Naive thymus-derived CD4-positive, alpha-beta T cell (primary cell): ENCODE measurements at regions of chr15 and their contacts with region 1.

Region 1: DNA sequence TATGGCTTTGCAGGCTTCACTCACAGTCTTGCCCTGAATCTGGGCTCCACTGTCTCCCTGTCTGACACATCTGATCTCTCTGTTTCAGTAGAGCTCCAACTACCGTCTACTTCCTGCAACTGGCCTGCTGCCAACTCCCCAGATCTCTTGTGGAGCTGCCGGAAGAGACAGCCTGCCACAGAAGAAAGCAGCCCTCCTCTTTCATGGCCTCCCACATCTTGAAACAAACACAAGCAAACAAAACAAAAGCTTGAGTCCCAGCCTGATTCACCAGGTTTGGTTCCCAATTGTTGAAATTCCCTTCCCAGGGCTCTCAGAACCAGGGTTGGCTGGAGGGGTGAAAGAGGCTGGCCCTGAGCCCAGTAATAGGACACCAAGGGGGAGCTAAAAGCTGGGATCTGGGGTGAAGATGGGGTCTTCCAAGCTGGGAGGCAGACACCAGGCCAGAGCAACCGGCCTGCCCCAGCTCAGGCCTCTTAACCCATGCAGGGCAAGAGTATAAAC is 55.3 kb upstream of the CA12 start:
- DNase-seq: peak; percentile 58 to 91 (median 84)
- ATAC-seq: peak; percentile 89
- H3K4me3 ChIP-seq: peak overlapping the region; percentile 33
- H3K4me3 Mint-ChIP-seq: peak overlapping the region; percentile 9 to 86 (median 69)
- H3K27ac ChIP-seq: peak overlapping the region; percentile 62
- H3K27ac Mint-ChIP-seq: peak overlapping the region; percentile 83 to 97 (median 92)
- H3K4me1 ChIP-seq: peaks cover 4 to 38% of the 10 kb centered on the region in 2 donors
- H3K4me1 Mint-ChIP-seq: peaks cover 16 to 74% (median 52%) of the 10 kb centered on the region in 7 donors
- H3K27me3 ChIP-seq: no peaks in the 10 kb centered on the region
- H3K27me3 Mint-ChIP-seq: no peaks in the 10 kb centered on the region

Region 2: DNA sequence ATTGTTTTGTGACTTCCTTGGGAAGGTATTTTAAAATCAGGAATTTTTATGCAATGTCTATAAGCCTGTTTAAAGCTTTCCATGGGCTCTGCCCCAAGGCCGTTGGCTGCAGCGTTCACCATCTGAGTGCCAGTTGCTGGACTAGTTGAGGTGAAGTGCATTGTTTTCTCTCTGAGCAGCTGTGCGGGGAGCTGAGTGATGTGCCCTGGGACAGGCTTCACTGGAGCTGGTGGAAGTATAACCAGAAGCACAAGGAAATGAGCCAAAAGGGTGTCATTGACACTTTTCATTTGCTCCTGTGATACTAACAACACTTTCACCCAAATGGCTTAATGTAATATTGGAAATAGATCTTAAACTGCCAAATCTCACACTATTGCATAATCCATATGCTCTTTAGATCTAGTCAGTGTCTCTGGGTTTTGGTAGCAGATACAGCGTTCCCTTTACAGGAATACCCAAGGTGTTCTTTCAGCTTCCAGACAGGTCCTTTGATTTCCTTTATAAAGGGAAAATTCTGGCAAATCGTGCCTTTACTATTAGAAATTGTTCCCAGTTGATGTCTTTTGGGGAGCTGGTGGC is 130.3 kb before region 1 on chr15:
- CTCF ChIA-PET with region 1: no interaction called
- POLR2A ChIA-PET with region 1: no interaction called
- intact Hi-C with region 1: loop called in 1 of 2 experiments (anchors 10 kb)
- DNase-seq: no peak
- ATAC-seq: no peak
- H3K4me3 ChIP-seq: no peak overlapping the region
- H3K4me3 Mint-ChIP-seq: no peak overlapping the region
- H3K27ac ChIP-seq: no peak overlapping the region
- H3K27ac Mint-ChIP-seq: no peak overlapping the region
- H3K4me1 ChIP-seq: no peaks in the 10 kb centered on the region
- H3K4me1 Mint-ChIP-seq: no peaks in the 10 kb centered on the region
- H3K27me3 ChIP-seq: no peaks in the 10 kb centered on the region
- H3K27me3 Mint-ChIP-seq: peaks cover 0 to 2% (median 0%) of the 10 kb centered on the region in 5 donors